Cardiac septum (tissue), 1 donor: ENCODE measurements at regions of chr3 and their contacts with region 1.

Region 1: DNA sequence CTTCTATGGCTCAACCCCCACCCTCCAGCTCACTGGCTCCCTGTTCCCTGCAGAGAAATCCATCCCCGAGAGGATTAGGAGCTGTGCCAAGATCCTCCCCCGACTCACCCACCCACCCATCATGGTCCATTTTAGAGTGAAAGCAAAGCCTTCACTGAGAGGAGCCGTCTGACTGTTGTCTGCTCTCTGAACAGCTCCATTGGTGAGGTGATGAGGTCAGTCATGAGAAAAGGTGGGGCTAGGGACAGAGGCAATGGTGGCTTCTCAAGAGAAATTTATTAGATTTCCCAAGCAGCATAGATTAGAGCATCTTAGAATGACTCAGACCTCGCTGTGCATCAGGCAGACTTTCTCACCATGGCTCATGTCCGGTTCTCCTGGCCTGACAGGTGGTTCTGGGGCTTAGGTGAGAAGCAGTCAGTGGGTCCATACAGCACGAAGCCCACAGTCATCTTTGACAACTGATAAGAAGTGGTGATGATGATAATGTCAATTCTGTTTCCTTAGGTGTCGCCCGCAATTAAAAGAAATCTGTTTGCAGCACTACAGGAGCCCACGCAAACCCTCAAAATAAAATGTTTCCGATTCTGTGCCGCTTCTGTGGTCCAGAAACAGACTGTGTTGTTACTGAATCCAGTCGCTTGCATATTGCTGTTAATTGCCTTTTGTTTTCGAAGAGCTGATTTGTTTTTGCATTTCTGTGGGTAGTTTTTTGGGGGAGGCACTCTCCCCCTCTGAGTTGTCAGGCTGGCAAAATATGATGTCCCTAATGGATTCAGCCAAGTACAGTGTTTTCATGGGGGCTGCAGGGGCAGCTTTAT is 24.8 kb upstream of the RHO start:
- DNase-seq: no peak

Region 2: DNA sequence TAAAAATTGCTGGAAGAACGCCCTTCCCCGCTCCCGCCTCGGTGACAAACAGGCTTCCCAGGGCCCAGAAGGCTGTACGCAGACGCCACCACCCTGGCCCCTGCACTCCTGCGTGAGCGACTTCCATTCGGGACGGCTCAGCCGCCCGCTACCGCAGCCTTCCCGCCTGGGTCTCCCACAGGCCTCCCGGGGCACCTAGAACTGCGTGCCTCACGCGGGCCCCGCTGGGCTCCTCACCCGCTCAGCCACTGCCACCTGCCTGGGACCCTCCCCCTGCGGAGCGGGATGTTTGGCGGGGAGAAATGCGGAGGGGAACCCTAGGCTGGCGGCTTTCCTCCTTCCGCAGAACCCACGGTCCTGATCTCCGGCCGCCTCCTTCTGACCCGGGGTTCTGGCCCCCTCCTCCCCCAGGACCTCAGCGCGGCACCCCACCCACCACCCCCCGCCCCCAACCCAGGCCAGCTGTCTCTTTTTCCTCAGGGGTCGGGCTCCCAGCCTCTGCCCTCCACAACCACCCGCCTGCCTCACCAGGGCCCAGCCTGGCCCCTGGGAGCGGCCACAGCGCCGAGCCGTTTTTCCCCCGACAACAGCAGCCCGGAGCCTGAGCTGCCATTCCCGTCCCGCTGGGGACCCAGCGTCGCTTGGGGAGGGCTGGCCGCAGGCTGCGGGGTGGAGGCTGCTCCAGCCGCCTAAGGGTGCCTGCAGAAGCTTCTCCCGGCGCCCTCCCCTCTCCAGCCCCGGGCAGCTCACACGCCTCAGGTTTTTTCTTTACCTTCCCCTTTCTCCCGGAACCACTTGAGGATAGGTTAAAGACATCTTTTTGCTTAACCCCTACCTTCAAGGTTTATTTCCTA is 805.2 kb before region 1 on chr3:
- intact Hi-C with region 1: no loop called
- DNase-seq: peak; percentile 79

Region 3: DNA sequence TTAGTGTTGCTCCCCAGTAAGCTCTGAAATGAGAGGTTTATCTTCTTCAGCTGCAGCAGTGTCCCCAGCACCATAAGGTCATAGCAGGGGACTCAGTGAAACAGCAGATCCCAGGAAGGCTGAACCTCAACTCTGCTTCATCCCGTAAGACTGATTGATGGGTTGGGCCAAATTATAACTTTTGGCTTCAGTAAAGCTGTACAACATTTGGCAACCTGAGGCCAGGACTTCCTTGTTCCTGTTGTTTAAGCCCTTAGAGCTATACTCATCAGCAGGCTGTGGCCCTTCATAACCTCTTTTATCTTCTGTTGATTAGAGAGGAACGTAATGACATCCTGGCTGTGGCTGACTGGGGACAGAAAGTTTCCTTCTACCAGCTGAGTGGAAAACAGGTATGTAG is 34.7 kb before region 1 on chr3:
- intact Hi-C with region 1: loop called (anchors 1 kb)
- DNase-seq: no peak

Region 4: DNA sequence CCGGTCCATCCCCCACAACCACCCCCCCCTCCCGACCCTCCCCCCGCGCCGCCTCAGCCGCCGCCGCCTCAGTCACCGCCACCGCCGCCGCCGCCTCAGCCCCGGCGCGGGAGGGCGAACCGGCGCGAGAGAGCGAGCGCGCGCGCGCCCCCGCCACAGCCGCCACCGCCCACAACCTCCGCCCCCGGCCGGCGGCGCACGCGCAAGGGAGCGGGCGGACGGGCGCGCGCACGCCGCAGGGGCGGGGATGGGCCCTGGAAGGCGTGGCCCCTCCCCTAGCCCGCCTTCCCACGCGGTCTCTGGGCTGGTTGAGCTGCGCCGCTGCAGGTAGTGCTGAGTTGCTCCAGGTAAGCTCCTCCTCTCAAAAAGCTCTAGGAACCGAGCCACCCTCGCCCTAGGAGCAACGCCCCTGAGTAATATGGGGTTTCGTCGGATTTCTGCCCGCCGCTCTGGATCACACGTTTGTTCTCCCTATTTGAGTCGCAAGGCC is 389.9 kb after region 1 on chr3 and contains the start of gene TMCC1:
- intact Hi-C with region 1: no loop called
- DNase-seq: peak; percentile 94
- total RNA-seq, gene TMCC1: 35.2 TPM